CD8-positive, alpha-beta T cell (primary cell): ENCODE measurements at regions of chr12 and their contacts with region 1.

Region 1: DNA sequence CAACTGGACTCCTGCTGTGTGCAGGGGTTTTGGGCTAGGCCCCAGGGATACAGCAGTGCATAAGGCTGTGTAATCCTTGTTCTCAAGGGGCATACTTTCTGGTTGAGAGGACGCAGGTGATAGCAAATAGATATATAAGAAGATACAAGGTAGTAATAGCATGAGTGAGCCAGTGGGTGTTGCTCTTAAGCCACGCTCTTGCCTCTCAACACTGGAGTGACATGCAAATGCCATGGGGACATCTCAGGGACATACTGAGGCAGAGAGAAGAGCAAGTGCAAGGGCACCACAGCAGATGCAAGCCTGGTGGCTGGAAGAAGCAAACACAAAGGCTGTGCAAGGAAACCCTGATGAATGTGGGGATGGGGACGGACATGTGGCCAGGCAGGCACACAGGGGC is 223.3 kb downstream of the CHST11 start:
- DNase-seq: peak in 5 of 9 experiments; percentile 22 to 70 (median 58)
- ATAC-seq: peak; percentile 48
- H3K4me3 ChIP-seq: no peak overlapping the region
- H3K4me3 Mint-ChIP-seq: no peak overlapping the region
- H3K27ac ChIP-seq: no peak overlapping the region
- H3K27ac Mint-ChIP-seq: no peak overlapping the region
- H3K4me1 ChIP-seq: peaks cover 34% of the 10 kb centered on the region
- H3K4me1 Mint-ChIP-seq: peaks cover 56% of the 10 kb centered on the region
- H3K27me3 ChIP-seq: no peaks in the 10 kb centered on the region
- H3K27me3 Mint-ChIP-seq: no peaks in the 10 kb centered on the region
- CTCF ChIP-seq: peak; percentile 46

Region 2: DNA sequence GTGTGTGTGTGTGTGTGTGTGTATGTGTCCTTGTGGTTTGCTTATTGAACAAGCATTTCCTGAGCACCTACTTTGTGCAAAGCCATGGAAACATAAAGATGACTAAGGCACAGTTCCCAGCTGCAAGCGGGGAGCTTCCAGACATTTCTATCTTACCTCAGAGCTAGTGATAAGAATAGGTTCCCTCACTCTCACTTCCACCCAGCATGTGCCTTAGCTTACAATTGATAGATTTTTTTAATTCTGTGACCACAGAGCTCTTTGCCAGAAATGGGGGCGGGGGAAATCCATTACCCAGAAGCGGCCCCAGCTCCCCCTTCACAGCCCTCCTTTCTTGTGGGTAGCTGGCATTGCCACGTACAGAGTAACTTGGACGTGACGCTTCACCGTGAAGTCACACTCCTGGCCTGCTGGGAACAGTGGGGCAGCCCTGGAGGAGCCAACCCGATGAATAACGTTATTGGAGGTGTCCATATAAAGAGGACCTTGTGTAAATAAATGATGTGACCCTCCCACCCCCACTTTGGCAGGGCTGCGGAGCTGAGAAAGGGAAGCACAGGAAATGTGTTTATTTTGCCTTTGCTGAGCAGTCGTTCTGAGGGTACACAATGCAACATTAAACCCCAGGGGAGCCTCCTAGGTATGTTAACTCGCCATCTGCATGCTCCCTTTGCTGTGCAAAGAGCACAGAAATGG is 15.5 kb after region 1 on chr12:
- CTCF ChIA-PET with region 1: interaction called, 5 read pairs
- POLR2A ChIA-PET with region 1: no interaction called
- intact Hi-C with region 1: loop called in 1 of 2 experiments (anchors 1 kb)
- DNase-seq: peak in 7 of 9 experiments; percentile 34 to 91 (median 65)
- ATAC-seq: peak; percentile 94
- H3K4me3 ChIP-seq: no peak overlapping the region
- H3K4me3 Mint-ChIP-seq: peak overlapping the region; percentile 32
- H3K27ac ChIP-seq: no peak overlapping the region
- H3K27ac Mint-ChIP-seq: peak overlapping the region; percentile 70
- H3K4me1 ChIP-seq: peaks cover 25% of the 10 kb centered on the region
- H3K4me1 Mint-ChIP-seq: peaks cover 58% of the 10 kb centered on the region
- H3K27me3 ChIP-seq: no peaks in the 10 kb centered on the region
- H3K27me3 Mint-ChIP-seq: no peaks in the 10 kb centered on the region
- CTCF ChIP-seq: no peak

Region 3: GRCh38 chr12:104709692-104710435 is 29.8 kb after region 1 on chr12:
- CTCF ChIA-PET with region 1: no interaction called
- POLR2A ChIA-PET with region 1: no interaction called
- intact Hi-C with region 1: no loop called
- DNase-seq: no peak
- ATAC-seq: no peak
- H3K4me3 ChIP-seq: no peak overlapping the region
- H3K4me3 Mint-ChIP-seq: no peak overlapping the region
- H3K27ac ChIP-seq: no peak overlapping the region
- H3K27ac Mint-ChIP-seq: peak overlapping the region; percentile 57
- H3K4me1 ChIP-seq: no peaks in the 10 kb centered on the region
- H3K4me1 Mint-ChIP-seq: peaks cover 21% of the 10 kb centered on the region
- H3K27me3 ChIP-seq: no peaks in the 10 kb centered on the region
- H3K27me3 Mint-ChIP-seq: no peaks in the 10 kb centered on the region
- CTCF ChIP-seq: no peak

Region 4: GRCh38 chr12:104720339-104721038 is 40.4 kb after region 1 on chr12:
- CTCF ChIA-PET with region 1: no interaction called
- POLR2A ChIA-PET with region 1: interaction called, 3 read pairs
- intact Hi-C with region 1: loop called (anchors 2 kb)
- DNase-seq: peak; percentile 43 to 92 (median 73)
- ATAC-seq: peak; percentile 77
- H3K4me3 ChIP-seq: peak overlapping the region; percentile 42 to 53
- H3K4me3 Mint-ChIP-seq: peak overlapping the region; percentile 67
- H3K27ac ChIP-seq: peak overlapping the region; percentile 61 to 71
- H3K27ac Mint-ChIP-seq: peak overlapping the region; percentile 87
- H3K4me1 ChIP-seq: peaks cover 49% of the 10 kb centered on the region
- H3K4me1 Mint-ChIP-seq: peaks cover 71% of the 10 kb centered on the region
- H3K27me3 ChIP-seq: no peaks in the 10 kb centered on the region
- H3K27me3 Mint-ChIP-seq: no peaks in the 10 kb centered on the region
- CTCF ChIP-seq: no peak

Region 5: DNA sequence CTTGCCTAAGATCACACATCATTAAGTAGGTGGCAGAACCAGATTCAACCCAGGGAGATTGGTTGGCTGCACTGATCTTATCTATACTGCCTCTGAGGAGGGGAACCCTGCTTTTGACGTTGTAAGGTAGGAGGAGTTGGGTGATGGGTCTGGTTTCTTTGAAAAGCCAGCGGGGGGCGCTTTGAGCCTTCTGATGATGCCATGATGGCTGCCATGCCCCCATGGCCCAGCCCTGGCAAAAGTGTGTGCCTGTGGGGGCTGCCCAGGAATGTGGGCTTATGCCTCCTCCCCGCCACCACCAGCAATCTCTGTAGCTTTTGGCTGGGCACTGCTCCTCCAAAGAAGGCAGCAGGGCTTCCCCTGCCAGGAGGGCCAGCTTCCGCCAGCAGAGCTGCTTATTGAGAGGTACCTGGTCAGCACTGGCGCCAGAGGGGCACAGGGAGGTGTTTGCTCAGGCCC is 53.7 kb after region 1 on chr12:
- CTCF ChIA-PET with region 1: no interaction called
- POLR2A ChIA-PET with region 1: no interaction called
- intact Hi-C with region 1: no loop called
- DNase-seq: peak in 2 of 9 experiments; percentile 40 to 55
- ATAC-seq: peak; percentile 63
- H3K4me3 ChIP-seq: no peak overlapping the region
- H3K4me3 Mint-ChIP-seq: no peak overlapping the region
- H3K27ac ChIP-seq: no peak overlapping the region
- H3K27ac Mint-ChIP-seq: no peak overlapping the region
- H3K4me1 ChIP-seq: peaks cover 27% of the 10 kb centered on the region
- H3K4me1 Mint-ChIP-seq: peaks cover 68% of the 10 kb centered on the region
- H3K27me3 ChIP-seq: no peaks in the 10 kb centered on the region
- H3K27me3 Mint-ChIP-seq: no peaks in the 10 kb centered on the region
- CTCF ChIP-seq: no peak

Region 6: GRCh38 chr12:104750061-104750460 is 70.0 kb after region 1 on chr12:
- CTCF ChIA-PET with region 1: no interaction called
- POLR2A ChIA-PET with region 1: no interaction called
- intact Hi-C with region 1: no loop called
- DNase-seq: peak in 1 of 9 experiments; percentile 31
- ATAC-seq: no peak
- H3K4me3 ChIP-seq: no peak overlapping the region
- H3K4me3 Mint-ChIP-seq: no peak overlapping the region
- H3K27ac ChIP-seq: no peak overlapping the region
- H3K27ac Mint-ChIP-seq: peak overlapping the region; percentile 10
- H3K4me1 ChIP-seq: peaks cover 19% of the 10 kb centered on the region
- H3K4me1 Mint-ChIP-seq: peaks cover 56% of the 10 kb centered on the region
- H3K27me3 ChIP-seq: no peaks in the 10 kb centered on the region
- H3K27me3 Mint-ChIP-seq: no peaks in the 10 kb centered on the region
- CTCF ChIP-seq: no peak

Region 7: DNA sequence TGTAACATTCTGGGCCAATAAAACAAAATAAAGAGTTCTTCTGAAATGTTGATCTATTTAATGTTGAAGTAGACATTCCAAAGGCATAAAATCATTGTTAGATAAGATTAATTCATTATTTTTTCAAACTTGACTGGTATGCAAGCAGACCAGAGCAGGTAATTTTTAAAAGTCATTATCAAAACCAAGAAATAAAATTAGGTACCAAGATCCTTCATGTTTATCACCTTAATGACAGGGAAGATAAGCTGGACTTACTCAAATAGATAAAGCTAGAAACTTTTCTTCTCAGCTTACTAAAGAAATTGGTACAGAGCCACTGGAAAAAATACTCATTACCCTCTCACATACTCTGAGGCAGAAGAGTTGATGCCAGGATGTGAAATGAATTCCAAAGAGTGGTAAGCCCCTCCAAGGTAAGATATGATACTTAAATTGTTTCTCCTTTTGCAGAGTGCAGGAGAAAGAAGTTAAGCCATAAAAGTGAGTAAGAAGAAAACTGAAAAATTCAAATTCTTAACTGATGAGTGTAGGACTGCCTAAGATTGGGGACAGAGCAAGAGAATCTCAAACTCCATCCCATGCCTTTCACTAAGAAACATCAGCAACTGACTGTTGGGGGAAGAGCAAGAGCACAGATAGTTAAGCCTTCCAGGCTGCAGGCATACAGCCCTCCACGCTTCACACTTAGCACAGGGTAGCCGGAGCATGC is 166.1 kb after region 1 on chr12:
- CTCF ChIA-PET with region 1: no interaction called
- POLR2A ChIA-PET with region 1: no interaction called
- intact Hi-C with region 1: no loop called
- DNase-seq: no peak
- ATAC-seq: no peak
- H3K4me3 ChIP-seq: no peak overlapping the region
- H3K4me3 Mint-ChIP-seq: no peak overlapping the region
- H3K27ac ChIP-seq: no peak overlapping the region
- H3K27ac Mint-ChIP-seq: no peak overlapping the region
- H3K4me1 ChIP-seq: no peaks in the 10 kb centered on the region
- H3K4me1 Mint-ChIP-seq: no peaks in the 10 kb centered on the region
- H3K27me3 ChIP-seq: no peaks in the 10 kb centered on the region
- H3K27me3 Mint-ChIP-seq: peaks cover 3% of the 10 kb centered on the region
- CTCF ChIP-seq: no peak

Region 8: DNA sequence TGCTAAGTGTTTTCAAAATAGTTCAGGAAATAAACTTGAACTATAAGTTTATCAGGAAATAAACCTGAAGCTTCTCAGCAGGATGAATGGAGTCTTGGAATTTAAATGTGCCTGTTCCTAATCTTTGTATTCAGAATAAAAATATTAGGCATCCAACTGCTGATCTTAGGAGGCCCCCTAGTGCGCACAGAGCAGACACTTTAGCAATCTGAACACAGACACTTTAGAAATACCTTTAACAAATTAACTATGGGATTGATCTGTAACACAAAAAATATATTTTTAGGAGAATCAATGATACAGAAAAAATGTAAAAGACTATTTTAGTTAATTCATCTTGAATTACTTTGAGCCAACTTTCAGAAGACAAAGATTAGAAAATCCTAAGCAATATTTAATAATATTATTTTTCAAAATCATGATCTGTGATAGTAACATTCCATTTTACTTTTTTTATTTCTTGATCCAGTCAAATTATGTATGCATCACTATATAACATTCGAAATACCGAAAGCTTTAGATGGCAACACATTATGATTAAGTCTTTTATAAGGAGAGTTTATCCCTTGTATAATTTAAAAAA is 197.1 kb after region 1 on chr12:
- CTCF ChIA-PET with region 1: interaction called, 3 read pairs
- POLR2A ChIA-PET with region 1: no interaction called
- intact Hi-C with region 1: loop called (anchors 1 kb)
- DNase-seq: peak; percentile 3 to 60 (median 31)
- ATAC-seq: no peak
- H3K4me3 ChIP-seq: no peak overlapping the region
- H3K4me3 Mint-ChIP-seq: no peak overlapping the region
- H3K27ac ChIP-seq: no peak overlapping the region
- H3K27ac Mint-ChIP-seq: no peak overlapping the region
- H3K4me1 ChIP-seq: no peaks in the 10 kb centered on the region
- H3K4me1 Mint-ChIP-seq: no peaks in the 10 kb centered on the region
- H3K27me3 ChIP-seq: no peaks in the 10 kb centered on the region
- H3K27me3 Mint-ChIP-seq: no peaks in the 10 kb centered on the region
- CTCF ChIP-seq: peak; percentile 83

Region 9: GRCh38 chr12:104958009-104958945 is 278.2 kb after region 1 on chr12 and contains the start of gene SLC41A2:
- CTCF ChIA-PET with region 1: no interaction called
- POLR2A ChIA-PET with region 1: no interaction called
- intact Hi-C with region 1: loop called in 1 of 2 experiments (anchors 5 kb)
- DNase-seq: peak; percentile 52 to 90 (median 76)
- ATAC-seq: peak; percentile 90
- H3K4me3 ChIP-seq: peak within 1 kb of the TSS; percentile 61 to 97
- H3K4me3 Mint-ChIP-seq: peak within 1 kb of the TSS; percentile 94
- H3K27ac ChIP-seq: peak within 1 kb of the TSS; percentile 40 to 42
- H3K27ac Mint-ChIP-seq: peak within 1 kb of the TSS; percentile 85
- H3K4me1 ChIP-seq: peaks cover 13% of the 10 kb centered on the region
- H3K4me1 Mint-ChIP-seq: peaks cover 19% of the 10 kb centered on the region
- H3K27me3 ChIP-seq: no peaks in the 10 kb centered on the region
- H3K27me3 Mint-ChIP-seq: peaks cover 17% of the 10 kb centered on the region
- CTCF ChIP-seq: no peak
- total RNA-seq, gene SLC41A2: 3.4 to 4.2 TPM